Mucosa of descending colon (tissue), 3 donors: ENCODE measurements at regions of chr19 and their contacts with region 1.

Region 1: DNA sequence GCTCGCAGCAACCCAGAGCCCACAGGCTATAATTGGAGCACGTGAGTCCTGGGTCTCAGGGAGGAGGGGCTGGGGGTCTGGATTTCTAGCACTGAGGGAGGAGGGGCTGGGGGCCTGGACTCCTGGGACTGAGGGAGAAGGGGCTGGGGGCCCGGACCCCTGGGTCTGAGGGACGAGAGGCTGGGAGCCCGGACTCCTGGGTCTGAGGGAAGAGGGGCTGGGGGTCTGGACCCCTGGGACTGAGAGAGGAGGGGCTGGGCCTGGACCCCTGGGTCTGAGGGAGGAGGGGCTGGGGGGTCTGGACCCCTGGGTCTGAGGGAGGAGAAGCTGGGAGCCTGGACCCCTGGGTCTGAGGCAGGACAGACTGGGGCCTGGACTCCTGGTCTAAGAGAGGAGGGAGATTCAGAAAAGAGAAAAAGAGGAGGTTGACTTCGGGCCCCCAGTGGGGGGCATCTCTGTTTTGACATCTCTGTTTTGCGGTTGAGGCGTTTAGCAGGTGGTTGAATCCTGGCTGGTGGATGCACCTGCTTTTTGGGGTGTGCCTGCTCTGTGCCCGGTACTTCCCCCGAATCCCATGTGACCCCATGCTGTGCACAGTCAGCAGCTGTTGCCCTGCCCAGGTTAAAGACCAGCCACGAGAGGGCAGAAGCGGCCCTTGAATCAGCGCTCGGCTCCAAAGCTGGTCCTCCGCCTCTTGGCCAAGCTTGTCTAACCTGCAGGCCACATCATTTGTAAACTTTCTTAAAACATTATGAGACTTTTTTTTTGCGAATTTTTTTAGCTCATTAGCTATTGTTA is 10.5 kb downstream of the PVR start:
- DNase-seq: peak; percentile 81 to 90 (median 86)
- ATAC-seq: peak; percentile 93
- H3K4me3 ChIP-seq: no peak overlapping the region
- H3K4me1 ChIP-seq: no peaks in the 10 kb centered on the region
- CTCF ChIP-seq: no peak

Region 2: DNA sequence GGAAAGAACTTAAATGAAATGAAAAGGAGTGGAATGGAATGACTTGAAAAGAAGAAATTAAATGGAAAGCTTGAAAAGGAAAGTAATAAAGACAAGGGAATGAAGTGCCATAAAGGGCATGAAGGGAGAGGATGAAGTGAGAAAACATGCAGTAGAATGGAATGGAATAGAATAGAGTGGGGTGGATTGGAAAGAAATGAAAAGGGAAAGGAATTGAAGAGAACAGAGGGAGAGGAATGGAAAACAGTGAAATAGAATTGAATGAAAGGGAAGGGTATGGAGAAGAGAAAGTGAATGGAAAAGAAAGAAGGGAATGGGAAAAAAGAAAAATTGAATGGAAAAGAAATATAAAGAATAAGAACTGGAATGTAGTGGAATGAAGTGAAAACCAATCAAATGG is 144.7 kb before region 1 on chr19:
- intact Hi-C with region 1: no loop called
- DNase-seq: no peak
- ATAC-seq: no peak
- H3K4me3 ChIP-seq: no peak overlapping the region
- H3K4me1 ChIP-seq: no peaks in the 10 kb centered on the region
- CTCF ChIP-seq: no peak

Region 3: DNA sequence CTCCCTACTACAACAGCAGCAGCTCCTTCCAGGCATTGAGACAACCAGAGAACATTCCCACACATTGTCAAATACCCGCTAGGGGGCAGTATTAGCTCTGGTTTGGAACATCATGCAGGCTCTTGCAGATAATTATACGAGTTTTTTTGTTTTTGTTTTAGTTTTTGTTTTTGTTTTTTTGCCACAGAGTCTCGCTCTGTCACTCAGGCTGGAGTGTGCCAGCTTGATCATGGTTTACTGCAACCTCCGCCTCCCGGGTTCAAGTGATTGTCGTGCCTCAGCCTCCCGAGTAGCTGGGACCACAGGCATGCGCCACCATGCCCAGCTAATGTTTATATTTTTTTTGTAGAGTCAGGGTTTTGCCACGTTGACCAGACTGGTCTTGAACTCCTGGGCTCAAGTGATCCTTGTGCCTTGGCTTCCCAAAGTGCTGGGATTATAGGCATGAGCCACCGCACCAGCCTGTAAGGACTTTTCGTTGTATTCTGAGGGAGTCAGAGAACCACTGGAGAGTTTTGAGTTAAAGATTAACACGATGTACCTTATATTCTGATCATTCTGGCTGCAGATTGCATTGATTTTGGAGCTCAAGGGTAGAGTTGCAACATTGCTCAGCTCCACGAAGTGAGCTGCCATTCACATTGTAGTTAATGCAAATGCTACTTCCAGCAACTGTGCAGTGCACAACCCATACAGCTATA is 83.0 kb before region 1 on chr19:
- intact Hi-C with region 1: loop called (anchors 5 to 10 kb)
- DNase-seq: peak in 1 of 3 donors; percentile 94
- ATAC-seq: peak; percentile 90
- H3K4me3 ChIP-seq: no peak overlapping the region
- H3K4me1 ChIP-seq: peaks cover 5% of the 10 kb centered on the region
- CTCF ChIP-seq: peak; percentile 65

Region 4: GRCh38 chr19:44576843-44577565 is 77.2 kb before region 1 on chr19:
- intact Hi-C with region 1: loop called (anchors 5 to 10 kb)
- DNase-seq: peak in 1 of 3 donors; percentile 64
- ATAC-seq: peak; percentile 80
- H3K4me3 ChIP-seq: no peak overlapping the region
- H3K4me1 ChIP-seq: no peaks in the 10 kb centered on the region
- CTCF ChIP-seq: peak; percentile 57